ENCODE measurements at regions of chr2 and their contacts with region 1.

Region 1: DNA sequence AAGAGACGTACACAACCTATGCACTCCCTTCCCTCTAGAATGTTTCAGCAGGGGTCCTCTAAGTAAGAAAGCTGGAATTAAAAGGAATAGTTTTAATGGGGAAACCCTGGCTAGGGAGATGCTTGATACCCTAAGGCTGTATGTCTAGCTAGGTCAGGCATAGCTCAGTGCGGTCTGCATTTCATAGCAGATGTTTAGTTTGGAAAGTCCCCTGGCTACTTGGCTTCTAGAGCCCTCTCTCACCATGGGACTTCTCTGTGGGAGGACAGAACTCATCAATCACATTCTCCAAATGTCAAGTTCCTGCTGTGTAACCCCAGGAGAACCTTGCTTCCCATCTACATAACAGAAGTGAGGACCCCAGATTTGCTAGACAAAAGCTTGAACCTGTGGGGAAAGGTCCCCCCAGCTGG is 24.1 kb upstream of the ANXA4 start:
- DNase-seq: no peak
- ATAC-seq: no peak
- H3K4me3 Mint-ChIP-seq: no peak overlapping the region
- H3K27ac Mint-ChIP-seq: no peak overlapping the region
- H3K4me1 Mint-ChIP-seq: peaks cover 15% of the 10 kb centered on the region
- H3K27me3 Mint-ChIP-seq: no peaks in the 10 kb centered on the region

Region 2: DNA sequence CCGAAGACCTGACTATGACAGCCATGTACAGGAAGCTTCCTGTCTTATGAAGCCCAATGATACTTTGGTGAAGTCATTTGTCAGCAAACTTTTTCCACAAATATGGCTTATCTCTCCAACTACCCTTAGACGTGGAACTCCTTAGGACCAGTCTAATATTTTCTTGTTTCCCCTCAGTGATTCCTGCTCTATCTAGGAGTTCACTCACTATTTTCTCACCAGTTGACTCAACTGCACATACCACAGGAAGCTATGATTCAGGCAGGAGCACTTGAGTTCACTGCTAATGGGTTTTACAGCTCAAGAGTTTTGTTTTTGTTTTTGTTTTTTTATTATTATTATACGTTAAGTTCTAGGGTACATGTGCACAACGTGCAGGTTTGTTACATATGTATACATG is 595.6 kb before region 1 on chr2:
- CTCF ChIA-PET with region 1: no interaction called
- POLR2A ChIA-PET with region 1: no interaction called
- intact Hi-C with region 1: no loop called
- DNase-seq: no peak
- ATAC-seq: peak; percentile 58
- H3K4me3 Mint-ChIP-seq: no peak overlapping the region
- H3K27ac Mint-ChIP-seq: no peak overlapping the region
- H3K4me1 Mint-ChIP-seq: peaks cover 2% of the 10 kb centered on the region
- H3K27me3 Mint-ChIP-seq: peaks cover 3% of the 10 kb centered on the region

Region 3: GRCh38 chr2:69375494-69376353 is 342.1 kb before region 1 on chr2:
- CTCF ChIA-PET with region 1: interaction called, 3 read pairs
- POLR2A ChIA-PET with region 1: no interaction called
- intact Hi-C with region 1: loop called (anchors 1 to 5 kb)
- DNase-seq: no peak
- ATAC-seq: peak; percentile 85
- H3K4me3 Mint-ChIP-seq: no peak overlapping the region
- H3K27ac Mint-ChIP-seq: peak overlapping the region; percentile 1
- H3K4me1 Mint-ChIP-seq: peaks cover 15% of the 10 kb centered on the region
- H3K27me3 Mint-ChIP-seq: no peaks in the 10 kb centered on the region

Region 4: GRCh38 chr2:69386789-69387734 is 330.8 kb before region 1 on chr2 and contains the start of gene GFPT1:
- CTCF ChIA-PET with region 1: no interaction called
- POLR2A ChIA-PET with region 1: no interaction called
- intact Hi-C with region 1: loop called in 1 of 2 experiments (anchors 2 kb)
- DNase-seq: peak; percentile 96
- ATAC-seq: peak; percentile 96
- H3K4me3 Mint-ChIP-seq: peak within 1 kb of the TSS; percentile 81
- H3K27ac Mint-ChIP-seq: peak within 1 kb of the TSS; percentile 92
- H3K4me1 Mint-ChIP-seq: peaks cover 45% of the 10 kb centered on the region
- H3K27me3 Mint-ChIP-seq: no peaks in the 10 kb centered on the region
- total RNA-seq, gene GFPT1: 31.0 to 36.1 TPM

Region 5: GRCh38 chr2:69559442-69560146 is 158.3 kb before region 1 on chr2:
- CTCF ChIA-PET with region 1: interaction called, 25 read pairs
- POLR2A ChIA-PET with region 1: no interaction called
- intact Hi-C with region 1: loop called (anchors 1 kb)
- DNase-seq: peak; percentile 27
- ATAC-seq: peak; percentile 75
- H3K4me3 Mint-ChIP-seq: no peak overlapping the region
- H3K27ac Mint-ChIP-seq: peak overlapping the region; percentile 58
- H3K4me1 Mint-ChIP-seq: peaks cover 87% of the 10 kb centered on the region
- H3K27me3 Mint-ChIP-seq: no peaks in the 10 kb centered on the region

Region 6: GRCh38 chr2:69616756-69617155 is 101.1 kb before region 1 on chr2:
- CTCF ChIA-PET with region 1: interaction called, 4 read pairs
- POLR2A ChIA-PET with region 1: no interaction called
- intact Hi-C with region 1: loop called in 1 of 2 experiments (anchors 5 kb)
- DNase-seq: peak; percentile 65
- ATAC-seq: peak; percentile 30
- H3K4me3 Mint-ChIP-seq: peak overlapping the region; percentile 11
- H3K27ac Mint-ChIP-seq: peak overlapping the region; percentile 73
- H3K4me1 Mint-ChIP-seq: peaks cover 41% of the 10 kb centered on the region
- H3K27me3 Mint-ChIP-seq: no peaks in the 10 kb centered on the region

Region 7: DNA sequence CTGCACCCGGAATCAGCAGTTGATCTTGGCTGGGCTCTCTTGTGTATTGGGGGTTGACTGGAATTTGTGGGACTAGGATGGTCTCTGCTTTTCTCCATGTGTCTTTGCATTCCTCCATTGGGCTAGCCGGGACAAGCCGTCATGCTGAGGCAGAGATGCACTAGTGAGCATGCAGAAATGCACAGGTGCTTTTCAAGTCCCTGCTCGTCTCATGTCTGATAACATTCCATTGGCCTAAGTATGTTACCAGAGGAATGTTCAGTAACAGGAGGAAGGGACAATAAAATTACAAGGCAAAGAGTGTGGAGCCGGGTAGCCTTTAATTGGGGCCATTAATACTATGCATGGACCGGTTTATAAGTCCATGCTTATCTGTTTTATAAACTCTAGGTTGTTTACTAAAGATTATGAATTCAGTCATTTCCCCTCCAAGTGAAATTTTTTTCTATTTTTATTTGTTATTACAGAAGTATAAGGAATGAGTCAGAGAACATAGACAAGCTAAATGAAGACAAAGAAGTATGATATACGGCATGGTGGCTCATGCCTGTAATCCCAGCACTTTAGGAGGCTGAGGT is 50.0 kb before region 1 on chr2:
- CTCF ChIA-PET with region 1: no interaction called
- POLR2A ChIA-PET with region 1: no interaction called
- intact Hi-C with region 1: no loop called
- DNase-seq: no peak
- ATAC-seq: no peak
- H3K4me3 Mint-ChIP-seq: no peak overlapping the region
- H3K27ac Mint-ChIP-seq: no peak overlapping the region
- H3K4me1 Mint-ChIP-seq: peaks cover 10% of the 10 kb centered on the region
- H3K27me3 Mint-ChIP-seq: no peaks in the 10 kb centered on the region

Region 8: GRCh38 chr2:70412294-70413070 is 694.6 kb after region 1 on chr2:
- CTCF ChIA-PET with region 1: no interaction called
- POLR2A ChIA-PET with region 1: no interaction called
- intact Hi-C with region 1: no loop called
- DNase-seq: no peak
- ATAC-seq: no peak
- H3K4me3 Mint-ChIP-seq: no peak overlapping the region
- H3K27ac Mint-ChIP-seq: no peak overlapping the region
- H3K4me1 Mint-ChIP-seq: no peaks in the 10 kb centered on the region
- H3K27me3 Mint-ChIP-seq: no peaks in the 10 kb centered on the region

Measured in activated CD4-positive, alpha-beta T cell treated with anti-CD3 and anti-CD28 coated beads for 36 hours (primary cell).